ENCODE measurements at regions of chr20 and their contacts with region 1.

Region 1: DNA sequence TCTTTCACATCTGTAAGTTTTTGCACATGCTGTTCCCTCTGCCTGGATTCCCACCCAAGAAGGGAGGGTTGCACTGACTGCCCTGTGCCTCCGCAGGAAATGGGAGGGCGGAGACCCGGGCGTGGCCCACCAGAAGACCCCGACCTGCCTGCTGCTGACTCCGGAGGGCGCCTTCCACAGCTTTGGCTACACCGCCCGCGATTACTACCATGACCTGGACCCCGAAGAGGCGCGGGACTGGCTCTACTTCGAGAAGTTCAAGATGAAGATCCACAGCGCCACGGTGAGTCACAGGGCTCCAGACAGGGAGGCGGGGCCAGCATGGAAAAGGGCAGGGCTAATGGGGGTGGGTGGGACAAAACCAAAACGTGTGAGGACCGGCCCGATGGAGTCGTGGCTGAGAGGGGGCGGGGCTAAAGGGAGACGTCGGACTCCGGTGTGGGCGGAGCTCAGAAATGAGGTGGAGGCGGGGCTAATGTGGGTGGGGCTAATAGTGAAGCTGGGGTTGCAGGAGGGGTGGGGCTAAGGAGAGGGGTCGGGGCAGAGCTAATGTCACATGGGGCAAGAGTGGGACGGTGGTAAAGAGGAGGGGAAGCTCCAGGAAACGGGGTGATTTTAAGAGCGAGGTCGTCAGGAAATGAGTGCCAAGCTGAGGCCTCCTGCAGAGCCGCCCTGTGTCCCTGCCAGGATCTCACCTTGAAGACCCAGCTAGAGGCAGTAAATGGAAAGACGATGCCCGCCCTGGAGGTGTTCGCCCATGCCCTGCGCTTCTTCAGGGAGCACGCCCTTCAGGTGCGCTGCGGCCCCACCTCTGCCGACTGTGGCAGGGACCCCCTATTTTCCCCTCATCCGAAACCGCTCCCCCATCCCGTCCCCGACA is 12.6 kb downstream of the HSPA12B start:
- DNase-seq: peak; percentile 69
- H3K4me3 ChIP-seq: no peak overlapping the region
- H3K27ac ChIP-seq: no peak overlapping the region
- H3K4me1 ChIP-seq: no peaks in the 10 kb centered on the region
- H3K27me3 ChIP-seq: no peaks in the 10 kb centered on the region
- CTCF ChIP-seq: no peak

Region 2: DNA sequence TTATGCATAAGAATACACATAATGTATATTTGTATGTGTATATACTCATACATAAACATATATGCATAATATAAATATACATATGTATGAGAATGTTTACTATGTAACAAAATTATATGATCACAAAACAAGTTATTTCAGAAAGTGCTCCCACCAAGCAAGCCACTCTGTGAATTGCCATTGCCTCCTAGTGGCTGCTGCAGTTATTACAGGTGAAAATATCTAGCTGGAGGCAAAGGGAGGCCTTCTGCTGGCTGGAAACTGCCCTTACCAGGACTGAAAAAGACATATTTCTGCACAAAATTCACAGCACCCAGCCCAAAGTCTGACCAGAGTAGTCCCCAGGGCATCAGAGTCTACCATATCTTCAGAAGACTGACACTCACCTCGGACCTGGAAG is 48.8 kb before region 1 on chr20:
- CTCF ChIA-PET with region 1: interaction called, 10 read pairs
- POLR2A ChIA-PET with region 1: no interaction called
- intact Hi-C with region 1: no loop called
- DNase-seq: no peak
- H3K4me3 ChIP-seq: no peak overlapping the region
- H3K27ac ChIP-seq: no peak overlapping the region
- H3K4me1 ChIP-seq: no peaks in the 10 kb centered on the region
- H3K27me3 ChIP-seq: no peaks in the 10 kb centered on the region
- CTCF ChIP-seq: peak; percentile 59

Region 3: GRCh38 chr20:3724356-3724755 is 20.7 kb before region 1 on chr20:
- CTCF ChIA-PET with region 1: no interaction called
- POLR2A ChIA-PET with region 1: interaction called, 12 read pairs
- intact Hi-C with region 1: no loop called
- DNase-seq: no peak
- H3K4me3 ChIP-seq: no peak overlapping the region
- H3K27ac ChIP-seq: no peak overlapping the region
- H3K4me1 ChIP-seq: peaks cover 9% of the 10 kb centered on the region
- H3K27me3 ChIP-seq: peaks cover 4% of the 10 kb centered on the region
- CTCF ChIP-seq: no peak

Measured in A673 (cell line).